Activated naive CD4-positive, alpha-beta T cell treated with anti-CD3 and anti-CD28 coated beads for 36 hours (primary cell): ENCODE measurements at regions of chr20 and their contacts with region 1.

Region 1: GRCh38 chr20:3532089-3532615 is 61.3 kb downstream of the ATRN start:
- DNase-seq: no peak
- H3K4me3 Mint-ChIP-seq: no peak overlapping the region
- H3K27ac Mint-ChIP-seq: no peak overlapping the region
- H3K4me1 Mint-ChIP-seq: no peaks in the 10 kb centered on the region
- H3K27me3 Mint-ChIP-seq: no peaks in the 10 kb centered on the region

Region 2: GRCh38 chr20:1955217-1955616 is 1576.9 kb before region 1 on chr20:
- CTCF ChIA-PET with region 1: no interaction called
- intact Hi-C with region 1: no loop called
- DNase-seq: no peak
- H3K4me3 Mint-ChIP-seq: no peak overlapping the region
- H3K27ac Mint-ChIP-seq: no peak overlapping the region
- H3K4me1 Mint-ChIP-seq: no peaks in the 10 kb centered on the region
- H3K27me3 Mint-ChIP-seq: peaks cover 9% of the 10 kb centered on the region

Region 3: DNA sequence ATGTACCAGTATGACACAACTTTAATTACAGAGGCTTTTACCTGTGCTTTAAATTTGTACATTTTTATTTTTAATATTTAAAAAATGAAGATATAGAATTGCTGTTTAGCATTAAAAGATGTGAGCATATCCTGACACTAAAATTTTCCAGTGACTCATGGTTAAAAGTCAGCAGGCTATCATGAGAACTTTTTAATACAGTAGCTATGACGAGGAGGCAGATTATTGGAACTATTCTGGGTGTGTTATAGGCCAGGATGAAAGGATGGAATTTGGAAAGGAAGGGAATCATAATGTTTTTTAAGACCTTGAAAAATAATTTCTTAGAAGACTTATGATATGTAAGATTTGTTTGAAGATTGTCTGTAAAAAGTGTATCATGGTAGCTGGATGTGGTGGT is 40.0 kb after region 1 on chr20:
- CTCF ChIA-PET with region 1: no interaction called
- intact Hi-C with region 1: no loop called
- DNase-seq: no peak
- H3K4me3 Mint-ChIP-seq: no peak overlapping the region
- H3K27ac Mint-ChIP-seq: no peak overlapping the region
- H3K4me1 Mint-ChIP-seq: no peaks in the 10 kb centered on the region
- H3K27me3 Mint-ChIP-seq: no peaks in the 10 kb centered on the region

Region 4: GRCh38 chr20:3590164-3590563 is 58.0 kb after region 1 on chr20:
- CTCF ChIA-PET with region 1: no interaction called
- intact Hi-C with region 1: loop called (anchors 2 kb)
- DNase-seq: no peak
- H3K4me3 Mint-ChIP-seq: no peak overlapping the region
- H3K27ac Mint-ChIP-seq: no peak overlapping the region
- H3K4me1 Mint-ChIP-seq: no peaks in the 10 kb centered on the region
- H3K27me3 Mint-ChIP-seq: no peaks in the 10 kb centered on the region